Endothelial cell of umbilical vein (primary cell): ENCODE measurements at regions of chr2 and their contacts with region 1.

Region 1: GRCh38 chr2:161586517-161587167 is 37.6 kb upstream of the SLC4A10 start:
- DNase-seq: peak; percentile 42
- H3K4me3 ChIP-seq: no peak overlapping the region
- H3K27ac ChIP-seq: no peak overlapping the region
- H3K4me1 ChIP-seq: no peaks in the 10 kb centered on the region
- H3K27me3 ChIP-seq: no peaks in the 10 kb centered on the region
- CTCF ChIP-seq: peak; percentile 47
- POLR2A ChIP-seq: no peak

Region 2: GRCh38 chr2:161384864-161385263 is 201.8 kb before region 1 on chr2:
- CTCF ChIA-PET with region 1: no interaction called
- POLR2A ChIA-PET with region 1: no interaction called
- dilution Hi-C with region 1: no loop called
- intact Hi-C with region 1: no loop called
- DNase-seq: no peak
- H3K4me3 ChIP-seq: no peak overlapping the region
- H3K27ac ChIP-seq: no peak overlapping the region
- H3K4me1 ChIP-seq: no peaks in the 10 kb centered on the region
- H3K27me3 ChIP-seq: no peaks in the 10 kb centered on the region
- CTCF ChIP-seq: no peak
- POLR2A ChIP-seq: no peak

Region 3: GRCh38 chr2:161570424-161571050 is 16.1 kb before region 1 on chr2:
- CTCF ChIA-PET with region 1: no interaction called
- POLR2A ChIA-PET with region 1: no interaction called
- dilution Hi-C with region 1: no loop called
- intact Hi-C with region 1: no loop called
- DNase-seq: no peak
- H3K4me3 ChIP-seq: no peak overlapping the region
- H3K27ac ChIP-seq: no peak overlapping the region
- H3K4me1 ChIP-seq: no peaks in the 10 kb centered on the region
- H3K27me3 ChIP-seq: no peaks in the 10 kb centered on the region
- CTCF ChIP-seq: no peak
- POLR2A ChIP-seq: no peak

Region 4: GRCh38 chr2:161992526-161992925 is 405.9 kb after region 1 on chr2:
- CTCF ChIA-PET with region 1: no interaction called
- POLR2A ChIA-PET with region 1: no interaction called
- dilution Hi-C with region 1: no loop called
- intact Hi-C with region 1: loop called (anchors 1 kb)
- DNase-seq: no peak
- H3K4me3 ChIP-seq: no peak overlapping the region
- H3K27ac ChIP-seq: no peak overlapping the region
- H3K4me1 ChIP-seq: no peaks in the 10 kb centered on the region
- H3K27me3 ChIP-seq: no peaks in the 10 kb centered on the region
- CTCF ChIP-seq: no peak
- POLR2A ChIP-seq: no peak

Region 5: GRCh38 chr2:162143969-162144368 is 557.3 kb after region 1 on chr2:
- CTCF ChIA-PET with region 1: interaction called, 6 read pairs
- POLR2A ChIA-PET with region 1: no interaction called
- dilution Hi-C with region 1: no loop called
- intact Hi-C with region 1: loop called (anchors 5 kb)
- DNase-seq: no peak
- H3K4me3 ChIP-seq: no peak overlapping the region
- H3K27ac ChIP-seq: no peak overlapping the region
- H3K4me1 ChIP-seq: no peaks in the 10 kb centered on the region
- H3K27me3 ChIP-seq: peaks cover 5 to 7% of the 10 kb centered on the region in 2 experiments
- CTCF ChIP-seq: no peak
- POLR2A ChIP-seq: no peak